BJ (cell line): ENCODE measurements at regions of chr1 and their contacts with region 1.

Region 1: DNA sequence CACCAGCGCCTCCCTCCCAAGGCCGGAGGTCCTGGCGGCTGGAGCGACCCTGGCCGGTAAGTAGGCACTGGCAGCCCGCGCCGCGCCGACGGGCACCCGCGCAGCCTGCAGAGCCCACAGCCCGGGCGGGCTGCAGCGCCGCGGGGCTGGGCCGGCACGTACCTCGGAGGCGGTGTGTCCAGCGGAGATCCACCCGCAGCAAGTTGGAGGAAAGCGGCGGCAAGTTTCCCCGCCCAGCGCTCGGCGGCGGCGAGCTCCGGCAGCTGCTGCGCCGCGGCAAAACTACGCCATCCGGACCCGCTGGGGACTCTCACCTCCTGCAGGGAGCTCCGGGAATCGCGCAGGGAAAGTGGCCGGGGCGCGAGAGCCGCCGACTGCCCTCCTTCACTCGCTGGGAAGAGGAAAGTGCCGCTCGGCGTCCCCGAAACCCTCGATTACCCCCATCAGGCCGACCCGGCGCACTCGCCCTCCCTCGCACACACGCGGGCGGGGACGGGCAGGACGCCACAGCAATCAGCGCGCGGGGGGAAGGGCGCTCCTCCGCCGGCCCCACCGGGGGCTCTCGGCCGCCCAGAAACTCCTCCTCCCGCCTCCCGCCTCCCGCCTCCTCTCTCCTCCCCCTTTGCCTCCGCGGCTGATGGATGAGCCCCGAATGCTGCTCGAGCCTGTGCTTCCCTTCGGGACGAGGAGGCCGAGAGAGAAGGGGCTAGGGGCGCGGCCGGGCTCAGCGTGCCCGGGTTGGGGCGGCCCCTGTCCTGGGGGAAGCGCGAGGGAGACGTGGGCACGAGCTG is at the start of gene TGFBR3:
- DNase-seq: peak; percentile 51
- H3K4me3 ChIP-seq: peak within 1 kb of the TSS; percentile 94
- H3K27me3 ChIP-seq: no peaks in the 10 kb centered on the region
- CTCF ChIP-seq: peak; percentile 68
- polyA plus RNA-seq, gene TGFBR3: 8.2 and 8.3 TPM in 2 replicates

Region 2: DNA sequence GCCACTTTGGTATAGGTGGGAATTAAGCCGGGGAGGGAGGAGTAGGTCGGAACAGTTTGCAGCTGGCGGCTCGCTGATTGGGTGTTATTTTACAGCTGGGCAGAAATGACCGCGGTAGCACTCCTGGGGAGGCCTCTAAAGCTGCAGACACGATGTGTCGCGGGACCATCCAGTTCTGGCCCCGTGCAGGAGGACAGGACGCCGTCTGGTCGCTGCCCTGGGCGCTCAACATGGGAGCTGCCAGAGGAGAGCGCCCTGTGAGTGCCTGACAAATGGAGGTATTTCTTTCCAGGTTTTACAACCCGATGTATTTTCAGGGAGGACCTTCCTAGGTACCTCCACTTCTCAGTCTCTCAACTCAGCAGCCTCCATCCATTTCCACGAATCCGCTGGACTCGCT is 339.0 kb before region 1 on chr1:
- CTCF ChIA-PET with region 1: no interaction called
- POLR2A ChIA-PET with region 1: no interaction called
- DNase-seq: no peak
- H3K4me3 ChIP-seq: no peak overlapping the region
- H3K27me3 ChIP-seq: peaks cover 8% of the 10 kb centered on the region
- CTCF ChIP-seq: peak; percentile 13; the same call in 1 of the 2 replicates

Region 3: GRCh38 chr1:91619881-91620280 is 266.0 kb before region 1 on chr1:
- CTCF ChIA-PET with region 1: no interaction called
- POLR2A ChIA-PET with region 1: interaction called, 20 read pairs
- DNase-seq: no peak
- H3K4me3 ChIP-seq: no peak overlapping the region
- H3K27me3 ChIP-seq: no peaks in the 10 kb centered on the region
- CTCF ChIP-seq: no peak

Region 4: DNA sequence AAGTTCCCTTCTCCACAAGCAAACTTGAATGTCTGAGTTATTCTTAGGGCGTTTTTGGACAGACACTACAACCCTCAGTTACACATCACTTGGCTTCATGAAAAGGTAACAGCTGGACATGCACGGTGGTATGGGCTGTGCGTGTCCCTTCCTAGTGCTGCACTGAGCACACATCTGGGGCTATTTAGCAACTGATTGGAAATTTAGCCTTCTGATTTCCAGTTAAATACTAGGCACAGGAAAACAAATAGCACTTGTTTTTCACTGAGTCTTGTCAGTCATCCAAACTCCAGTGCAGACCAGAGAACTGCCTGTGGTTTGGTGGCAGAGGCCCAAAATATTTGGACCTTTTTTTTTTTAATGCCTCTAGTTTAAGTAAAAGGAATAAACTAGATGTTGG is 134.6 kb before region 1 on chr1:
- CTCF ChIA-PET with region 1: no interaction called
- POLR2A ChIA-PET with region 1: no interaction called
- DNase-seq: peak; percentile 84
- H3K4me3 ChIP-seq: no peak overlapping the region
- H3K27me3 ChIP-seq: no peaks in the 10 kb centered on the region
- CTCF ChIP-seq: no peak

Region 5: GRCh38 chr1:91924146-91924545 is 38.2 kb after region 1 on chr1:
- CTCF ChIA-PET with region 1: interaction called, 14 read pairs
- POLR2A ChIA-PET with region 1: no interaction called
- DNase-seq: peak; percentile 53
- H3K4me3 ChIP-seq: no peak overlapping the region
- H3K27me3 ChIP-seq: no peaks in the 10 kb centered on the region
- CTCF ChIP-seq: no peak